ENCODE measurements at regions of chr6 and their contacts with region 1.

Region 1: GRCh38 chr6:47047479-47048407 is 5.6 kb upstream of the ADGRF1 start:
- DNase-seq: peak; percentile 51
- ATAC-seq: peak; percentile 65
- H3K4me3 Mint-ChIP-seq: no peak overlapping the region
- H3K27ac Mint-ChIP-seq: no peak overlapping the region
- H3K4me1 Mint-ChIP-seq: no peaks in the 10 kb centered on the region
- H3K27me3 Mint-ChIP-seq: peaks cover 6% of the 10 kb centered on the region
- CTCF ChIP-seq: peak; percentile 37

Region 2: GRCh38 chr6:46848684-46849360 is 198.9 kb before region 1 on chr6:
- CTCF ChIA-PET with region 1: interaction called, 31 read pairs
- POLR2A ChIA-PET with region 1: no interaction called
- intact Hi-C with region 1: loop called (anchors 2 kb)
- DNase-seq: peak; percentile 75
- ATAC-seq: peak; percentile 73
- H3K4me3 Mint-ChIP-seq: peak overlapping the region; percentile 15
- H3K27ac Mint-ChIP-seq: no peak overlapping the region
- H3K4me1 Mint-ChIP-seq: peaks cover 2% of the 10 kb centered on the region
- H3K27me3 Mint-ChIP-seq: peaks cover 19% of the 10 kb centered on the region
- CTCF ChIP-seq: peak; percentile 95